A549 (cell line): ENCODE measurements at regions of chr7 and their contacts with region 1.

Region 1: DNA sequence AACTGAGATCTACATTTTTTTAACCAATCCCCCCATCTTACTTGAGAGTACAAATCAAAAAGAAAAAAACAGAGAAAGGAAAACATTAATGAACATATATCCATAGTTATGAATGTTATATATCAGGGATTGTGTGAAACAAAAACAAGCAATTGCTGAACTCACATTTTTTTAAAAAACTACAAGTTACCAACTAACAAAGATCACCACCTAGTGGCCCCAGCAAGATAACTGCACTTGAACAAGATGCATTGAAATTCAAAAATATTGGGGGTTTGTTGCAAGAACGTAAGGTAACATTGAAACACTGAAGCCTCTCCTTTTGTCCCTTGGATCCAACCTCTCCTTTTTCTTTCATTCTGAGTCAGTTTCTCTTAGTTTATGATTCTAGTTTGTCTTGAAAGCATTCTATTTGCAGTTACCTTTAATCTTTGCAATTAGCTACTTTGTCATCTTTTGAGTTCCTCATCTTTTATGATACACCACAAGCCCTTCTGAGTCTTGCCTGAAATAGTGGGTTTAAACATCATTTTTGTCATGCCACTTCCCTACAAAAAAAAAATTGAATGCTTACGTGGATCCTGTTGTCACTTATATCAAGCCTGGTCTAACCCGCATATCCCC is 87.3 kb upstream of the TES start:
- DNase-seq: peak; percentile 5 to 66
- ATAC-seq: peak; percentile 47 to 60; a peak in 2 of 6 replicates
- H3K4me3 ChIP-seq: no peak overlapping the region
- H3K27ac ChIP-seq: no peak overlapping the region
- H3K4me1 ChIP-seq: no peaks in the 10 kb centered on the region
- CTCF ChIP-seq: peak; percentile 74
- EP300 ChIP-seq: no peak
- POLR2A ChIP-seq: no peak
- RAD21 ChIP-seq: peak; percentile 71 to 77

Region 2: GRCh38 chr7:115748131-115748738 is 374.8 kb before region 1 on chr7:
- CTCF ChIA-PET with region 1: no interaction called
- POLR2A ChIA-PET with region 1: no interaction called
- DNase-seq: peak in 1 of 2 experiments; percentile 8
- ATAC-seq: peak in 1 of 2 experiments; percentile 70; a peak in 2 of 6 replicates
- H3K4me3 ChIP-seq: no peak overlapping the region
- H3K27ac ChIP-seq: no peak overlapping the region
- H3K4me1 ChIP-seq: no peaks in the 10 kb centered on the region
- CTCF ChIP-seq: peak; percentile 43; the same call in 2 of the 3 replicates
- EP300 ChIP-seq: no peak
- POLR2A ChIP-seq: no peak
- RAD21 ChIP-seq: peak; percentile 63 to 64

Region 3: GRCh38 chr7:116138202-116138801 is 15.2 kb after region 1 on chr7:
- CTCF ChIA-PET with region 1: interaction called, 12 read pairs
- POLR2A ChIA-PET with region 1: no interaction called
- DNase-seq: peak; percentile 46 to 72
- ATAC-seq: peak; percentile 94 to 99
- H3K4me3 ChIP-seq: no peak overlapping the region
- H3K27ac ChIP-seq: no peak overlapping the region
- H3K4me1 ChIP-seq: peaks cover 5% of the 10 kb centered on the region; the same call in 1 of the 3 replicates
- CTCF ChIP-seq: peak; percentile 93
- EP300 ChIP-seq: no peak
- POLR2A ChIP-seq: no peak
- RAD21 ChIP-seq: peak; percentile 88 to 90

Region 4: GRCh38 chr7:116180302-116180701 is 57.2 kb after region 1 on chr7:
- CTCF ChIA-PET with region 1: no interaction called
- POLR2A ChIA-PET with region 1: no interaction called
- DNase-seq: peak; percentile 36 to 62
- ATAC-seq: peak; percentile 84 to 88
- H3K4me3 ChIP-seq: no peak overlapping the region
- H3K27ac ChIP-seq: no peak overlapping the region
- H3K4me1 ChIP-seq: peaks cover 14% of the 10 kb centered on the region
- CTCF ChIP-seq: peak; percentile 91
- EP300 ChIP-seq: no peak
- POLR2A ChIP-seq: no peak
- RAD21 ChIP-seq: peak; percentile 89 to 94